HCT116 (cell line): ENCODE measurements at regions of chr9 and their contacts with region 1.

Region 1: DNA sequence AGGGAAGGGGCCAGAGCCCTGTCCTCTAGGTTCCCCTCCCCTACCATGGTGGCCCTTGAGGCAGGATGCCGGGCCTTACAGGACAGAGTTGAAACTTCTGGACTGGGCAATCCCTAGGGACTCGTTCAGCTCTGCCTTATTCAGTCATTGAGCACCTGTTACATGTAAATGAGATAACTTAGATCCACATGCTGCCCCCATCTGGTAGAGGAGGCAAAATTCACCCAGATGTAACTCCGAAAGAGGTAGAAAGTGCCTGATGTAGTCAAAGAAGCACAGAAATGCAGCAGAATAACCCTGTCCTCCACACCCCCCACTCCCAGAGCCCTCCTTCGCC is 1.5 kb downstream of the GGTA1 start:
- DNase-seq: peak; percentile 77
- ATAC-seq: peak; percentile 82
- H3K4me3 ChIP-seq: peak overlapping the region; percentile 52 to 72
- H3K27ac ChIP-seq: no peak overlapping the region
- H3K4me1 ChIP-seq: peaks cover 7 to 26% of the 10 kb centered on the region in 2 experiments; a peak in 3 of 4 replicates
- H3K27me3 ChIP-seq: no peaks in the 10 kb centered on the region; the same call in 1 of the 2 replicates
- CTCF ChIP-seq: peak; percentile 62 to 73 (median 73); a peak in 5 of 6 replicates
- POLR2A ChIP-seq: no peak
- RAD21 ChIP-seq: peak; percentile 60

Region 2: GRCh38 chr9:120916588-120916987 is 581.5 kb before region 1 on chr9:
- CTCF ChIA-PET with region 1: no interaction called
- POLR2A ChIA-PET with region 1: no interaction called
- RAD21 ChIA-PET with region 1: no interaction called
- intact Hi-C with region 1: no loop called
- DNase-seq: no peak
- ATAC-seq: peak; percentile 38; the same call in 1 of the 2 replicates
- H3K4me3 ChIP-seq: no peak overlapping the region
- H3K27ac ChIP-seq: no peak overlapping the region
- H3K4me1 ChIP-seq: no peaks in the 10 kb centered on the region
- H3K27me3 ChIP-seq: no peaks in the 10 kb centered on the region
- CTCF ChIP-seq: no peak
- POLR2A ChIP-seq: no peak
- RAD21 ChIP-seq: peak; percentile 36; the same call in 1 of the 2 replicates

Region 3: DNA sequence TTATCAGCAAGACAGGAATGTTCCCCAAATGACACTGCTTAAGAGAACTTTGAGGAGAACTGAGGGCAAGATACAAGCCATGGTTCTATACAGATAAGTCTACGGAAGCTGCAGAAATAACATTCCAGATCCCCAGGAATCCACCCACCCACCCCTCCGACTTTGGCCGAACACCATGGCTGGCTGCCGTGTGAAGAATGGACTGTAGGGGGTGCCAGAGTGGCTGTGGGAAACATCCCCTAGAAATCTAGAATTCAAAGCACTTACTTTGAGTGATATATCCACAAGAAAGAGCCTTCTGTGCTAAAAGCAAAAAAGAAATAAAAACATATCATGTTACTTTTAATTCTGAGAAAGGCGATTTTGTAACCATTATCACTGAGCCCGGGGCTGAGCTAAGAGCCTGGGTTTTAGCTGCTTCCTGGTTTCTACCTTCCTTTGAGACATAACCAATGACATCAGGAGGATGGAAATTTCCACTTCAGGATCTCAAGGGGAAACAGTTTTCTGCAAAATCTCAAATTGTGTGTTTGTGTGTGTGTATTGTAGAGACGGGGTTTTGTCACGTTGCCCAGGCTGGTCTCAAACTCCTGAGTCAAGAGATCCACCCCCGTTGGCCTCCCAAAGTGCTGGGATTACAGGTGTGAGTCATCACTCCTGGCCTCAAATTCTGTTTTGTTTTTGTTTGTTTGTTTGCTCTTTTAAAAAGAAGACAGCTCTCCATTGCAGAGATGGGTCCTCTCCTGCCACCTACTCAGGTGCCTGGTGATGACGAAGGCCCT is 34.9 kb before region 1 on chr9:
- CTCF ChIA-PET with region 1: interaction called, 4 read pairs
- POLR2A ChIA-PET with region 1: no interaction called
- RAD21 ChIA-PET with region 1: no interaction called
- intact Hi-C with region 1: loop called (anchors 2 kb)
- DNase-seq: peak; percentile 6
- ATAC-seq: peak; percentile 93
- H3K4me3 ChIP-seq: 0 out of 4 replicates have a peak overlapping the region, but pooled peaks of 1 of the 2 experiments have one; percentile 0
- H3K27ac ChIP-seq: no peak overlapping the region
- H3K4me1 ChIP-seq: peaks cover 6 to 11% of the 10 kb centered on the region in 2 experiments; a peak in 3 of 4 replicates
- H3K27me3 ChIP-seq: peaks cover 7% of the 10 kb centered on the region; the same call in 1 of the 2 replicates
- CTCF ChIP-seq: peak; percentile 63 to 90 (median 88); a peak in 5 of 6 replicates
- POLR2A ChIP-seq: no peak
- RAD21 ChIP-seq: peak; percentile 62